Gastrocnemius medialis (tissue), 4 donors: ENCODE measurements at regions of chr18 and their contacts with region 1.

Region 1: DNA sequence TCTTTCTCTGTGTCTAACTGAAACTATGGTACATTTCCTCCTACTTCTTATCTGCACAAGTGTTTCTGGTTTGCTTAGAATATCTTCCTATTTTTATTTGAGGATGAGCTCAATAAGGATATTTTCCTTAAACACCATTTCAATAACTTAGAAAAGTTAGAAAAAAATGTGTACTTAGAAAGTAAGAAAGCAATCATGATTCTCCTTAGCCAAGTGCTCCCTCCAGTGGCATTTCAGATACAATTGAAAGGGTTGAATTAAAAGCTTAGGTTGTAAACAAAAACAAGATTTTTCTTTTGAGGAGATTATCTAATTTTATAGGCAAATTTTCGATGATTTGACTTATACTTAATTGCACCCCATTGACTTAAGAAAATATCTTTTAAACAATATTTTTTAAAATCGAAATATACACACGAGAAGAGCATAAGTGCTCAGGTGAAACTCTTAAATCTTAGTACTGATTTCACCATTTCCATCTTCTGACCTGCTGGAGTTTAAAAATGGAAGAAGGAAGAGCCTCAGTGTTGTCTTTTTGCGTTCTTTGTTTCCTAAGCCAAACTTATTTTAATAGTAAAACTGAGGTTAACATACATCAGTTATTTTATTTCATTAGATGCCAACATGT is 26.9 kb downstream of the C18orf63 start:
- DNase-seq: no peak
- ATAC-seq: no peak
- H3K4me3 ChIP-seq: no peak overlapping the region
- H3K27ac ChIP-seq: no peak overlapping the region
- H3K4me1 ChIP-seq: no peaks in the 10 kb centered on the region
- H3K27me3 ChIP-seq: no peaks in the 10 kb centered on the region
- CTCF ChIP-seq: peak in 4 of 5 experiments; percentile 40 to 72 (median 70)
- POLR2A ChIP-seq: no peak

Region 2: GRCh38 chr18:74190086-74190485 is 152.4 kb before region 1 on chr18:
- in situ Hi-C with region 1: loop called in 3 of 4 experiments (anchors 5 kb)
- intact Hi-C with region 1: no loop called
- DNase-seq: no peak
- ATAC-seq: no peak
- H3K4me3 ChIP-seq: no peak overlapping the region
- H3K27ac ChIP-seq: no peak overlapping the region
- H3K4me1 ChIP-seq: no peaks in the 10 kb centered on the region
- H3K27me3 ChIP-seq: peaks cover 0 to 12% (median 0%) of the 10 kb centered on the region in 3 donors
- CTCF ChIP-seq: no peak
- POLR2A ChIP-seq: no peak

Region 3: GRCh38 chr18:74396171-74397169 is 53.9 kb after region 1 on chr18:
- in situ Hi-C with region 1: no loop called
- intact Hi-C with region 1: no loop called
- DNase-seq: no peak
- ATAC-seq: no peak
- H3K4me3 ChIP-seq: no peak overlapping the region
- H3K27ac ChIP-seq: no peak overlapping the region
- H3K4me1 ChIP-seq: peaks cover 3 to 8% of the 10 kb centered on the region in 2 donors
- H3K27me3 ChIP-seq: no peaks in the 10 kb centered on the region
- CTCF ChIP-seq: no peak
- POLR2A ChIP-seq: no peak

Region 4: DNA sequence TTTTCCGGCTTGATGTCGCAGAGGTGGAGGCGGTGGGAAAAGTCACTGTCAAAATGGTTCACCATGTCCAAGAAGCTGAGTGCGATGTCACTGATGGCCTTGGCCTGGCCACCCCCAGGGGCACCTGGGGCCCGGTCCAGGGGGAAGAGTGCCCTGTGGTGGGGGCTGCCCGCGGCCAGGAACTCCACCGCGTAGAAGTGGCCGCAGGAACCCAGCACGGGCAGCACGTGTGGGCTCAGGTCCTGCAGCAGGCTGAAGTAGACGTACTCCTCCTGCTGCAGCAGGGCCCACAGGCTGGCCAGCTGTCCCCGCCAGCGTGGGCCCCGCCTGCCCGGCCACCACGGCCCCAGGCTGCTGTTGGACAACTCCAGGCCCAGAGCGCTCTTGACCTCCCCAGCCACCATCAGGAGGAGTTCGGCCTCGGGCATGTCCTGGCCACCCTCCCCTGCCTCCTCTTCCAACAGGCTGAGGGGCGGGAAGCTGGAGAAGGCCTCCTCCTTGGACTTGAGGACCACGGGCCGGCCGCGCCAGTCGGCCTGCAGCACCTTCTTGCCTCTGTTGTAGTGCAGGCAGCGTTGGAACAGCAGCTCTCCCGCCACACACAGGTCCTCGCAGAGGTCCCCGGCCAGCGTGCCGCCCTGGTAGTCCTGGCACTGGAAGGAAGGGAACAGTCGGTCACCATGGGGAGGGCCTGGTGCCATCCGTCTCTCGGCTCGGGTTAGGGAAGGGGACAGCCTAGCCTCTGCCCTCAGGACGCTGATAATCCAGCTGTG is 104.3 kb after region 1 on chr18:
- in situ Hi-C with region 1: no loop called
- intact Hi-C with region 1: no loop called
- DNase-seq: no peak
- ATAC-seq: no peak
- H3K4me3 ChIP-seq: no peak overlapping the region
- H3K27ac ChIP-seq: no peak overlapping the region
- H3K4me1 ChIP-seq: no peaks in the 10 kb centered on the region
- H3K27me3 ChIP-seq: no peaks in the 10 kb centered on the region
- CTCF ChIP-seq: no peak
- POLR2A ChIP-seq: no peak

Region 5: GRCh38 chr18:74567822-74568221 is 225.3 kb after region 1 on chr18:
- in situ Hi-C with region 1: no loop called
- intact Hi-C with region 1: no loop called
- DNase-seq: no peak
- ATAC-seq: no peak
- H3K4me3 ChIP-seq: no peak overlapping the region
- H3K27ac ChIP-seq: no peak overlapping the region
- H3K4me1 ChIP-seq: no peaks in the 10 kb centered on the region
- H3K27me3 ChIP-seq: no peaks in the 10 kb centered on the region
- CTCF ChIP-seq: no peak
- POLR2A ChIP-seq: no peak